CD8-positive, alpha-beta T cell (primary cell): ENCODE measurements at regions of chr6 and their contacts with region 1.

Region 1: DNA sequence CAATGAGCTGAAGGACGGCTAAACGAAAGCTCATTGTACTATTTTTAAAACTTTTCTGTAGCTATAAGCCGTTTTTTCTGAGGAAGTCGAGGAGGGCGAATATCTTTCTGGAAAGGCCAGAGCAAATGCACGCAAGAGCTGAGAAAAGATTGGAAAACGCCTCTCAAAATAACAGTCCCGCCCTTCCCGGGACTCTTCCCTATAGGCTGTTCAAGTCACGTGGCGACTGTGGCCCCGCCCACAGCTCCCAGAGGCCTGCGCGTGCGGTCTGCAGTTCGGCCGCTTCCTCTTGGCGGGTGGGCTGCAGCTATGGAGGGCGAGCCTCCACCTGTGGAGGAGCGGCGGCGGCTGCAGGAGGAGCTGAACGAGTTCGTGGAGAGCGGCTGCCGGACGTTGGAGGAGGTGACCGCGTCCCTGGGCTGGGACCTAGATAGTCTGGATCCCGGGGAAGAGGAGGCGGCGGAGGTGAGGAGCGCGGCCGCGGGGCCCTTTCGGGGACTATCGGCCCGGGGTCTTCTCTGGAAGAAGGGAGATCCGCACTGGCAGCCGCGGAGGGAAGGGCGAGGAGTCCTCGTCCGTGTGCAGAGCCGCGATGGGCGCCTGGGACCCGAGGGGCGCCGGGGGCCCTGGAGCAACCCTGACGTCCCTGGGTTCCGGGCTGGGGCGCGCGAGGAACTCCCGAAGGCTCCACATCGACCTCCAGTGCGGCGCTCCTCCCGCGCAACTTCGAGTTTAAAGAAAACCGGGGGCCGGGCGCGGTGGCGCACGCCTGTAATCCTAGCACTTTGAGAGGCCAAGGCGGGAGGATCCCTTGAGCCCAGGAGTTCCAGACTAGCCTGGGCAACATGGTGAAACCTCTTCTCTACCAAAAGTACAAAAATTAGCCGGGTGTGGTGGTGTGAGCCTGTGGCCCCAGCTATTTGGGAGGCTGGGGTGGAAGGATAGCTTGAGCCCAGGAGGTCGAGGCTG is at the start of gene SNRNP48:
- DNase-seq: peak; percentile 80 to 94 (median 90)
- ATAC-seq: peak; percentile 97
- H3K4me3 ChIP-seq: peak within 1 kb of the TSS; percentile 76 to 92
- H3K4me3 Mint-ChIP-seq: peak within 1 kb of the TSS; percentile 100
- H3K27ac ChIP-seq: peak within 1 kb of the TSS; percentile 58 to 61
- H3K27ac Mint-ChIP-seq: peak within 1 kb of the TSS; percentile 95
- H3K4me1 ChIP-seq: peaks cover 25% of the 10 kb centered on the region
- H3K4me1 Mint-ChIP-seq: peaks cover 47% of the 10 kb centered on the region
- H3K27me3 ChIP-seq: no peaks in the 10 kb centered on the region
- H3K27me3 Mint-ChIP-seq: no peaks in the 10 kb centered on the region
- CTCF ChIP-seq: no peak
- total RNA-seq, gene SNRNP48: 12.2 to 12.9 TPM

Region 2: GRCh38 chr6:7389451-7390225 is 200.6 kb before region 1 on chr6 and contains the starts of genes CAGE1 and RIOK1:
- CTCF ChIA-PET with region 1: no interaction called
- POLR2A ChIA-PET with region 1: interaction called, 3 read pairs
- intact Hi-C with region 1: loop called (anchors 1 to 2 kb)
- DNase-seq: peak; percentile 85 to 97 (median 95)
- ATAC-seq: peak; percentile 89
- H3K4me3 ChIP-seq: peak within 1 kb of the TSS; percentile 77 to 91
- H3K4me3 Mint-ChIP-seq: peak within 1 kb of the TSS; percentile 98
- H3K27ac ChIP-seq: peak within 1 kb of the TSS; percentile 90 to 97
- H3K27ac Mint-ChIP-seq: peak within 1 kb of the TSS; percentile 100
- H3K4me1 ChIP-seq: peaks cover 29% of the 10 kb centered on the region
- H3K4me1 Mint-ChIP-seq: peaks cover 49% of the 10 kb centered on the region
- H3K27me3 ChIP-seq: no peaks in the 10 kb centered on the region
- H3K27me3 Mint-ChIP-seq: no peaks in the 10 kb centered on the region
- CTCF ChIP-seq: no peak
- total RNA-seq, gene CAGE1: 0.33 to 0.49 TPM
- total RNA-seq, gene RIOK1: 47.3 to 56.3 TPM

Region 3: GRCh38 chr6:7628479-7628878 is 38.2 kb after region 1 on chr6:
- CTCF ChIA-PET with region 1: no interaction called
- POLR2A ChIA-PET with region 1: no interaction called
- intact Hi-C with region 1: no loop called
- DNase-seq: no peak
- ATAC-seq: no peak
- H3K4me3 ChIP-seq: no peak overlapping the region
- H3K4me3 Mint-ChIP-seq: no peak overlapping the region
- H3K27ac ChIP-seq: no peak overlapping the region
- H3K27ac Mint-ChIP-seq: no peak overlapping the region
- H3K4me1 ChIP-seq: no peaks in the 10 kb centered on the region
- H3K4me1 Mint-ChIP-seq: no peaks in the 10 kb centered on the region
- H3K27me3 ChIP-seq: no peaks in the 10 kb centered on the region
- H3K27me3 Mint-ChIP-seq: peaks cover 19% of the 10 kb centered on the region
- CTCF ChIP-seq: no peak

Region 4: GRCh38 chr6:7910654-7911344 is 320.6 kb after region 1 on chr6 and contains the start of gene TXNDC5:
- CTCF ChIA-PET with region 1: no interaction called
- POLR2A ChIA-PET with region 1: no interaction called
- intact Hi-C with region 1: loop called in 1 of 2 experiments (anchors 1 kb)
- DNase-seq: peak; percentile 38 to 81 (median 66)
- ATAC-seq: peak; percentile 87
- H3K4me3 ChIP-seq: peak within 1 kb of the TSS; percentile 69 to 75
- H3K4me3 Mint-ChIP-seq: peak within 1 kb of the TSS; percentile 77
- H3K27ac ChIP-seq: no peak within 1 kb of the TSS
- H3K27ac Mint-ChIP-seq: no peak within 1 kb of the TSS
- H3K4me1 ChIP-seq: peaks cover 15% of the 10 kb centered on the region
- H3K4me1 Mint-ChIP-seq: peaks cover 8% of the 10 kb centered on the region
- H3K27me3 ChIP-seq: no peaks in the 10 kb centered on the region
- H3K27me3 Mint-ChIP-seq: peaks cover 2% of the 10 kb centered on the region
- CTCF ChIP-seq: no peak
- total RNA-seq, gene TXNDC5: 5.8 to 7.6 TPM